ENCODE measurements at regions of chr1 and their contacts with region 1.

Region 1: GRCh38 chr1:229341774-229342655 is 832 bp downstream of the CCSAP start:
- DNase-seq: peak; percentile 82
- H3K4me3 Mint-ChIP-seq: peak overlapping the region; percentile 88
- H3K27ac Mint-ChIP-seq: peak overlapping the region; percentile 74
- H3K4me1 Mint-ChIP-seq: peaks cover 40% of the 10 kb centered on the region
- H3K27me3 Mint-ChIP-seq: peaks cover 9% of the 10 kb centered on the region

Region 2: GRCh38 chr1:228445843-228446650 is 896.0 kb before region 1 on chr1:
- CTCF ChIA-PET with region 1: no interaction called
- intact Hi-C with region 1: no loop called
- DNase-seq: peak; percentile 68
- H3K4me3 Mint-ChIP-seq: peak overlapping the region; percentile 77
- H3K27ac Mint-ChIP-seq: no peak overlapping the region
- H3K4me1 Mint-ChIP-seq: peaks cover 15% of the 10 kb centered on the region
- H3K27me3 Mint-ChIP-seq: peaks cover 32% of the 10 kb centered on the region

Region 3: GRCh38 chr1:229270547-229271447 is 71.2 kb before region 1 on chr1 and contains the start of gene RAB4A:
- CTCF ChIA-PET with region 1: no interaction called
- intact Hi-C with region 1: loop called (anchors 2 kb)
- DNase-seq: peak; percentile 57
- H3K4me3 Mint-ChIP-seq: peak within 1 kb of the TSS; percentile 86
- H3K27ac Mint-ChIP-seq: peak within 1 kb of the TSS; percentile 75
- H3K4me1 Mint-ChIP-seq: peaks cover 33% of the 10 kb centered on the region
- H3K27me3 Mint-ChIP-seq: no peaks in the 10 kb centered on the region
- total RNA-seq, gene RAB4A: 15.8 to 19.9 TPM

Region 4: GRCh38 chr1:229378586-229379367 is 36.8 kb after region 1 on chr1:
- CTCF ChIA-PET with region 1: no interaction called
- intact Hi-C with region 1: no loop called
- DNase-seq: no peak
- H3K4me3 Mint-ChIP-seq: no peak overlapping the region
- H3K27ac Mint-ChIP-seq: no peak overlapping the region
- H3K4me1 Mint-ChIP-seq: no peaks in the 10 kb centered on the region
- H3K27me3 Mint-ChIP-seq: no peaks in the 10 kb centered on the region

Region 5: DNA sequence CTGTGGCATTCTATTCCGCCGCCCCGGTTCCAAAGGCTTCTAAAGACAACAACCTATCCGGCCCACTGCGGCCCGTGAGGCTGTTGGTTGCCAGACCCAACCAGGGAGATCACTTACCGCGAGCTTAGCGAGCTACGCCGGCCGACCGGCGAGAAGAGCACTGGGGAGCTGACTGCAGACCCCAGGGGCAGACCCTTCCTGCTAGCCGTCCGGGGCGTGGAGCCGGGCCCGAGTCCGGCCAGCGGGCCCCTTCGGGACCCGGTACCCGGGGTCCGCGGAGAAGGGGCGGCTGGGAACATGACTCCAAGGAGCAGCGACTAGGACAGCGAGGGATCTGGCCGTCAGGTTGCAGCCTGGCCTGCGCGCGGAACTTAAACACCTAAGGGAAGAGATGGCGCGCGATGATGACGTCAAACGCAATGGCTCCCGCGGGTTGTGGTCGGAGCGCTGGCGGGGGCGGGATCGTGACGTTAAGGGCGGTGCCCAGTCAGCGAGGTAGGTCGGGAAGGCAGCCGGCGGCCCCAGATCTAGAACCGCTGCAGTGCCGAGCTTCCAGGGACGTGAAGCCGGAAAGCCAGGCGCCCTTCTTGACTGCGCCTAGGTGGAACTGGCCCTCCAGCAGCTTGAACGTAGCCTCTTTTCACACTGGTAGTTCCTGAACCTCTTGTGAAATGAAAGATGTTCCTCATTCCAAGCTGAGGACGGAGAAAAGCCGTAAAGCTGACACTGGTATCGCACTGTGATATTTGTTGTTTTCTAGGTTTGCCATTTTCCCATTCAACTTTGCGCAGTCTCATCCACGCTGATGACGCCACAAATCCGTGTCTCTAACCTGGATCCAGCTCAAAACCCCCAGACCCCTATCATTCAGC is 166.2 kb after region 1 on chr1 and contains the start of gene NUP133:
- CTCF ChIA-PET with region 1: interaction called, 3 read pairs
- intact Hi-C with region 1: loop called (anchors 1 kb)
- DNase-seq: peak; percentile 99
- H3K4me3 Mint-ChIP-seq: peak within 1 kb of the TSS; percentile 91
- H3K27ac Mint-ChIP-seq: peak within 1 kb of the TSS; percentile 91
- H3K4me1 Mint-ChIP-seq: peaks cover 25% of the 10 kb centered on the region
- H3K27me3 Mint-ChIP-seq: no peaks in the 10 kb centered on the region
- total RNA-seq, gene NUP133: 53.9 to 57.2 TPM

Region 6: GRCh38 chr1:229625915-229626831 is 284.2 kb after region 1 on chr1 and contains the starts of genes TAF5L and URB2:
- CTCF ChIA-PET with region 1: no interaction called
- intact Hi-C with region 1: loop called (anchors 1 kb)
- DNase-seq: peak; percentile 85
- H3K4me3 Mint-ChIP-seq: peak within 1 kb of the TSS; percentile 99
- H3K27ac Mint-ChIP-seq: peak within 1 kb of the TSS; percentile 89
- H3K4me1 Mint-ChIP-seq: peaks cover 51% of the 10 kb centered on the region
- H3K27me3 Mint-ChIP-seq: no peaks in the 10 kb centered on the region
- total RNA-seq, gene TAF5L: 10.3 TPM
- total RNA-seq, gene URB2: 9.5 to 10.0 TPM